Ascending aorta (tissue), 2 donors: ENCODE measurements at regions of chr9 and their contacts with region 1.

Region 1: DNA sequence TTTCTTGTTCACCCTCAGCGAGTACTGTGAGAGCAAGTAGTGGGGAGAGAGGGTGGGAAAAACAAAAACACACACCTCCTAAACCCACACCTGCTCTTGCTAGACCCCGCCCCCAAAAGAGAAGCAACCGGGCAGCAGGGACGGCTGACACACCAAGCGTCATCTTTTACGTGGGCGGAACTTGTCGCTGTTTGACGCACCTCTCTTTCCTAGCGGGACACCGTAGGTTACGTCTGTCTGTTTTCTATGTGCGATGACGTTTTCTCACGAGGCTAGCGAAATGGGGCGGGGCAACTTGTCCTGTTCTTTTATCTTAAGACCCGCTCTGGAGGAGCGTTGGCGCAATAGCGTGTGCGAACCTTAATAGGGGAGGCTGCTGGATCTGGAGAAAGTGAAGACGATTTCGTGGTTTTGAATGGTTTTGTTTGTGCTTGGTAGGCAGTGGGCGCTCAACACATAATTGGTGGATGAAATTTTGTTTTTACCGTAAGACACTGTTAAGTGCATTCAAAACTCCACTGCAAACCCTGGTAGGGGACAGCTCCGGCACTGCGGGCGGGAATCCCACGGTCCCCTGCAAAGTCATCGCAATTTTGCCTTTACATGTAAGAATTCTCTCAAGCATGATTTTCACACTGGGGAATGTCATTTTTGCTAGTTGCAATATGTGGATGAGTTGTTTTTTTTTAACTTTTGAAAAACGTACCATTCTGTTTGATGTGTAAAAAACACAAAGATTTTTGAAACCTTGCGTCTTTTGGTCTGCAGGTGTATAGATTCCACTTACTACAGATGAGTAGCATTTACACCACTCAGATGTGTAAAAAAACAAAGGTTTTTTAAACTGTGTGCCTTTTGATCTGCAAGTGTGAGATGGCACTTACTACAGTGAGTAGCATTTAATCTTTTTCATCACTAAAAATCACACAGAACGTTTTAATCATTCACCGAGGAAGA is 631 bp upstream of the C9orf72 start:
- DNase-seq: peak; percentile 97 to 99
- H3K4me3 ChIP-seq: peak overlapping the region; percentile 84 to 98
- H3K27ac ChIP-seq: peak overlapping the region; percentile 97 to 100
- H3K4me1 ChIP-seq: peaks cover 7 to 14% of the 10 kb centered on the region in 2 donors
- H3K27me3 ChIP-seq: no peaks in the 10 kb centered on the region
- CTCF ChIP-seq: no peak

Region 2: DNA sequence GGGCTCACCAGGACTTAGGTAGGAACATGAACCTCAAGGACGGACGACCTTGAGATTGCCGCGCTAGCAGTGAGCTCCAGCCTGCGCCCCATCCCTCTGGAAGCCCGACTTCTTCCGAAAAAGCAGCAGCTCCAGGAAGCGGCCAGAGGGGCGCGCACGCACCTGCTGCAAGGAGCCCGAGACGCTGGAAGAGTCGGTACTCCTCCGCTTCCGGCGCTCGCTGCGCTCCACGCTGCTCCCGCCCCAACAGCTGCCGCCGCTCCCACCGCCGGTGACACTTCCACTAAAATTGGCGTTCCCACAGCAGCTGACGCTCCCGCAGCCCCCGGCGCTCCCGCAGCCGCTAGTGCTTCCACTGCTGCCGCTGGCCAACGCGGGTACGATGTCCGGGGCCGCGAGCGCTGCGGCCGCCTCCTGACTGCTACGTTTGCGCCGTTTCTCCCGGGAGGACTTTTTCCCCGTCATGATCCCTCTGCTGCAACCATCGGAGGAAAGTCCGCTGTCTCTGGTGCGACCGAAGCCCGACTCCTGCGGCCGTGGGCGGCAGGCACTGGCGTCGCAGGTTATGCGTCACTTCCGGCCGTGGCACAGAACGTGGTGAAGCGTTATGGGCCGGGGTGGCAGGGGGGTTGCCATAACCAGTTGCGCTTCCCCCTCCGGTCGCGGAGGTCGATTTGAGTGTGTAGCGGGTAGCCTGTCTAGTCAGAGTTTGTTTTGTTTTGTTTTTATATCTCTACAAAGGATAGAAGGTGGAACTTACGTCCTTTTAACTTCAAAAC is 681.5 kb before region 1 on chr9 and contains the start of gene CAAP1:
- intact Hi-C with region 1: loop called (anchors 2 kb)
- DNase-seq: peak; percentile 62 to 95
- H3K4me3 ChIP-seq: peak within 1 kb of the TSS; percentile 95 to 98
- H3K27ac ChIP-seq: peak within 1 kb of the TSS; percentile 97 to 99
- H3K4me1 ChIP-seq: peaks cover 4 to 16% of the 10 kb centered on the region in 2 donors
- H3K27me3 ChIP-seq: no peaks in the 10 kb centered on the region
- CTCF ChIP-seq: peak; percentile 17 to 53 (median 43)
- total RNA-seq, gene CAAP1: 59.5 TPM

Region 3: GRCh38 chr9:26946753-26947727 is 626.9 kb before region 1 on chr9 and contains the start of gene PLAA:
- intact Hi-C with region 1: loop called (anchors 2 kb)
- DNase-seq: peak; percentile 60 to 93
- H3K4me3 ChIP-seq: peak within 1 kb of the TSS; percentile 75 to 96
- H3K27ac ChIP-seq: peak within 1 kb of the TSS; percentile 95 to 99
- H3K4me1 ChIP-seq: peaks cover 11 to 18% of the 10 kb centered on the region in 2 donors
- H3K27me3 ChIP-seq: no peaks in the 10 kb centered on the region
- CTCF ChIP-seq: no peak
- total RNA-seq, gene PLAA: 14.5 TPM

Region 4: GRCh38 chr9:26955921-26956859 is 617.7 kb before region 1 on chr9 and contains the start of gene IFT74:
- intact Hi-C with region 1: loop called (anchors 1 kb)
- DNase-seq: peak; percentile 97 to 99
- H3K4me3 ChIP-seq: peak within 1 kb of the TSS; percentile 63 to 79
- H3K27ac ChIP-seq: peak within 1 kb of the TSS; percentile 87 to 90
- H3K4me1 ChIP-seq: peaks cover 2 to 11% of the 10 kb centered on the region in 2 donors
- H3K27me3 ChIP-seq: no peaks in the 10 kb centered on the region
- CTCF ChIP-seq: no peak
- total RNA-seq, gene IFT74: 5.2 TPM

Region 5: DNA sequence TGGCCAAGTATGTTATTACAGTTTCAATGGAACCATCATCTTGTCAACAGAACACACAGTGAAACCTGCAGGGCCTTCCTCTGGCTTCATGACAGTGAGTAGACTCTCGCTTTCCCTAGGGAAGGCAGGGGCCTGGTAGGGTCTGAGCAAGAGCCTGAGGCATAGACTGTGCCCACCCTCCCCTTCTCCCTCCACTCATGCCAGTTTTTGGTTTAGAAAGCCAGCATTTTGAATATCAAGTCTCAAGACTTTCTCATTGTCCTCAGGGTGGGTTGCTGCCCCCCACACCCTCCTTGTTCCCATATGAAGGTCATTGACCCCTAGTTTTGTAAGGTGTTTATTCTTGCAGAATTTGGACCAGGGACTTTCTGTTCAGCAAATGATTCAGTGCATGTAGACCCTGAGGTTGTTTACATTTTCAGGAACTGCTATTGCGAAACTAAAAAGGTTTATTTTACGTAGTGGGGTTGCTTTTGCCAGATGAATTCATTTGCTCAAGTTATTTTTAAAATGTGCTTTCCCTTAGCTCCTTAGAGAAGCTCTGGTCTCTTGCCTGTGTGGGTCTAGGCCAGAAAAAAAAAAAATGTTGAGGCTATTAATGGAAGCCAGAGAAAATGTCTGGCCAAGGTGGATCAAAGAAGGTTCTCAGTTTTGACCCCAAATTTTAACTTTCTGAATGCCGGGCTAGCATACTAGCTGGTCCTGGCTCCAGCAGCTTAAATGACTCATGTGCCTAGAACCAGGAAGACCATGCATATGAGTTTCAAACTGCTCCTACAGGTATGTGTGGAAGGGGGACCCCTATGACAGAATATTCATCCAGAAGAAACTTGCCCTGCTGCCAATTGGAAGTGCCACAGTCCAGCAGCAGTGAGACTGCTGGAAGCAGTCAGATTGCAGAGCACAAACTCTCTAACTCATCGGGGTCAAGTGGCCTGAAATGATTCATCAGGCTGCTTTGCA is 34.2 kb before region 1 on chr9:
- intact Hi-C with region 1: loop called (anchors 2 kb)
- DNase-seq: peak; percentile 18 to 77
- H3K4me3 ChIP-seq: peak overlapping the region in 1 of 2 donors; percentile 23
- H3K27ac ChIP-seq: peak overlapping the region; percentile 85 to 88
- H3K4me1 ChIP-seq: peaks cover 20 to 69% of the 10 kb centered on the region in 2 donors
- H3K27me3 ChIP-seq: no peaks in the 10 kb centered on the region
- CTCF ChIP-seq: no peak